ENCODE measurements at regions of chr3 and their contacts with region 1.

Region 1: GRCh38 chr3:141452036-141452435 is 34.8 kb upstream of the RASA2 start:
- DNase-seq: peak in 2 of 4 donors; percentile 46 to 73
- ATAC-seq: peak; percentile 77
- H3K4me3 ChIP-seq: no peak overlapping the region
- H3K27ac ChIP-seq: peak overlapping the region in 1 of 2 donors; percentile 62
- H3K4me1 ChIP-seq: peaks cover 8 to 18% of the 10 kb centered on the region in 2 donors
- H3K27me3 ChIP-seq: no peaks in the 10 kb centered on the region
- CTCF ChIP-seq: peak; percentile 33 to 54

Region 2: DNA sequence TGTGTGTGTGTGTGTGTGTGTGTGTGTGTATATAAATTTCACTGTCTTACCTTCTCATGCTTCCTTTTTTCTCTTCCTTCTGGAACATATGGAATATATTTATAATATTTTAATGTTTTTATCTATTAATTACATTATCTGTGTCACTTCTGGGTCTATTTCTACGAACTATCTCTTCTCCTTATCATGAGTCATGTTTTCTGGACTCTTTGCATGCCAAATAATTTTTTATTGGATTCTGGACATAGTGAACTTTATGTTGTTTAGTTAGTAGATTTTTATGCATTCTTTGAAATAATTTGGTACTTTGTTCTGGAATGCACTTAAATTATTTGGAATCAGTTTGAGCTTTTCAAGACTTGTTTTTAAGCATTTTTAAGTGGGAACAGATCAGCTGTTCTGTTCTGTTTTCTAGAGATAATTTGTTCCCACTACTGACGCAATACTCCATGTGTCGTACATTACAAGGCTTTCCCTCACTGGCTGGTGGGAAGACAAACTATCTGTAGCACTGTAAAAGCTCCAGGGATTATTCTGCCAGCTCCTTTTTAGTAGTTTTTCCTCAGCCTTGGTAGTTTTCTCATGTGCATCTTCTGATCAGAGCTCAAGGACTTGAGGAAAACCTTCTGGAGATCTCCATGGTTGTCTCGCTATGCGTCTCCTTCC is 1215.1 kb before region 1 on chr3:
- intact Hi-C with region 1: no loop called
- DNase-seq: no peak
- ATAC-seq: no peak
- H3K4me3 ChIP-seq: no peak overlapping the region
- H3K27ac ChIP-seq: no peak overlapping the region
- H3K4me1 ChIP-seq: no peaks in the 10 kb centered on the region
- H3K27me3 ChIP-seq: no peaks in the 10 kb centered on the region
- CTCF ChIP-seq: no peak

Region 3: GRCh38 chr3:140816372-140817195 is 635.5 kb before region 1 on chr3:
- intact Hi-C with region 1: no loop called
- DNase-seq: no peak
- ATAC-seq: no peak
- H3K4me3 ChIP-seq: no peak overlapping the region
- H3K27ac ChIP-seq: no peak overlapping the region
- H3K4me1 ChIP-seq: no peaks in the 10 kb centered on the region
- H3K27me3 ChIP-seq: no peaks in the 10 kb centered on the region
- CTCF ChIP-seq: no peak

Region 4: DNA sequence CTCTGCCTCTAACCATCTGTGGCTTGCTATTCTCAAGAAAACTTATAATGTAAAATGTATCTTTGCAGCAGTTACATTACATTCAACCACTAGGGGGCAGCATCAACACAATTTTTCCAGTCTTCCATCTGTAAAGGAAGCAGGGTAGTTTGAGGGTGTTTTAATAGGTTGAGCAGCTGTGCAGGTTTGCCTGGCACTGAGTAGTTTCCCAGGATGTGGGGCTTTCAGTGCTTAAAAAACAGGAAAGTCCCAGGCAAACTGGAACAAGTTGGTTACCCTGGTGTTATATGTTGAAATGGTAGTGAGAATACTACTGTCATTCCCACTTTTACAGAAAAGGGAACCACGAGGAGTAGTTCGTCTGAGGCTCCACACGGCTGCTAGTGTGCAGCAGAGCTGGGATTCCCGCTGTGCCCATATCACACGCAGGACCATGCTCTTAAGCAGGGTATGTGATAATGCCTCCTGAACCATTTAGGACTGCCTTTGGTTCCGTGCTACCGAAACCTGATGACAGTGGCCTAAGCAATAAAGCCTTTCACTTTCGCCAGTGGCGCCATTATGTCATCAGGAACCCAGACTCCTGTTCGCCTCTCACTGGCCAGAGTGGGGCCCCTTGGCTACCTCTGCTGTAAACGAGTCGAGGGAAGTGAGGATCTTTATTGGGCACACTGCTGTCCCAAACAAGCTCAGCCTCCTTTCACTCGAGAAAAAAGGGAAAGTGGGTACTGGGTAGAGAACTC is 148.4 kb before region 1 on chr3:
- intact Hi-C with region 1: loop called (anchors 5 to 10 kb)
- DNase-seq: peak in 2 of 4 donors; percentile 65 to 81
- ATAC-seq: peak; percentile 89
- H3K4me3 ChIP-seq: no peak overlapping the region
- H3K27ac ChIP-seq: no peak overlapping the region
- H3K4me1 ChIP-seq: peaks cover 0 to 19% of the 10 kb centered on the region in 2 donors
- H3K27me3 ChIP-seq: no peaks in the 10 kb centered on the region
- CTCF ChIP-seq: peak; percentile 80 to 81

Region 5: DNA sequence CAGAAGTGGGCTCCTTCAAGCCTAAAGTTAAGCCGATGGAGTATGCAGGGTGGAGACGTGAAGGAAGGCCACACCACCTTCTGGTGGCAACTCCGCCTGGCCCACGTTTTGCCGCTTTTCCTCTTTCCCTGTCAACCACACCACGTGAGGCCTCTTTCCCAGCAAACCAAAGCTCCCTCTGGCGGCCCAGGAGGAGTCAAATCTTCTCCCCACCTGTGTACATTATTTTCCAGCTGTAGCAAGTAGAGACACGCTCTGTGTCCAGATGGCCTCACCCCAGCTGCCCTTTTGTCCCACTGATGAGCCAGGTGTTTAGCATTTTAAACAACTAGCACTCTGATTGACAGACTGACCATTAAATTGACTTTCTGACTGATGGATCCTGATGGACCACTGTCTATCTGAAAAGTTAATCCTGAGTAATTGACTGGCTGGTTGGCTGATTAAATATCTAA is 143.4 kb before region 1 on chr3:
- intact Hi-C with region 1: loop called (anchors 5 to 10 kb)
- DNase-seq: peak in 3 of 4 donors; percentile 64 to 75 (median 70)
- ATAC-seq: peak; percentile 35
- H3K4me3 ChIP-seq: no peak overlapping the region
- H3K27ac ChIP-seq: no peak overlapping the region
- H3K4me1 ChIP-seq: peaks cover 5 to 27% of the 10 kb centered on the region in 2 donors
- H3K27me3 ChIP-seq: no peaks in the 10 kb centered on the region
- CTCF ChIP-seq: peak; percentile 15 to 21

Region 6: DNA sequence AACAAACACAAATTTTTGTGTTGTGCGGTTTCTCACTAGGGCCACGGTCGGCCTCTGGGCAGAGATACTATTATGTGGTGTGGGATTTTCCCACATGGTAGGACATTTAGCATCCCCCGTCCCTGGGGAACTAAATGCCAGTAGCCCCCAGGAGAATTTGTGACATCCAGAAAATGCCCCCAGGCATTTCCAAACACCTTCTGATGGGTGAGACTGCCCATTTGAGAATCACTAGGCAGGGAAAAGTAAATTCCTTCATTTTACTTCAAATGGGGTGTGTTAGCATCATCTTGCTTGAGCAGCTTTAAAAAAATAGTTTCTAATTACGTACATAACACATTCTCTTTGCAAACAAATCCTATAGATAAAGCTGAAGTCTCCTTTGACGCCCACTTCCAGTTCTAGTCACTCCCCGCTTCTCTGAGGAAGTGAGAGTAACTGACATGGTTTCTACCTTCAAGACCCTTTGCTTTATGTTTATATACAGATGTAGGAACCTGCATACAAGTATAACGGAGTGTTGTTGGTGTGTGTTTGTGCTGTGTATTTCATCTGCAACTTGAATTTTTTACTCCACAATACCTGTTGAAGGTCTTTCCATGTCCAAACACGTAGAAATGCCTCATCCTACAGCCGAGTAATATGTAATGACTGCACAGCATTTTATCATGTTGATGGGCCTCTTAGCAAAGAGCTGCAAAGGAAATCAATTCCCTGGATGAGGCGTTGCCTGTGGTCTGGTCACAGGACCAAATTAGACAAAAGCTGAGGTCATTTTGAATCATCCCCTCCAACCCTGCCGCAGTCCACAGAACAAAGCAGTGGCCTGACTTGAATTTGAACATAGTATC is 115.1 kb before region 1 on chr3:
- intact Hi-C with region 1: no loop called
- DNase-seq: peak in 1 of 4 donors; percentile 13
- ATAC-seq: peak; percentile 27
- H3K4me3 ChIP-seq: no peak overlapping the region
- H3K27ac ChIP-seq: peak overlapping the region in 1 of 2 donors; percentile 31
- H3K4me1 ChIP-seq: peaks cover 5 to 7% of the 10 kb centered on the region in 2 donors
- H3K27me3 ChIP-seq: no peaks in the 10 kb centered on the region
- CTCF ChIP-seq: no peak

Region 7: DNA sequence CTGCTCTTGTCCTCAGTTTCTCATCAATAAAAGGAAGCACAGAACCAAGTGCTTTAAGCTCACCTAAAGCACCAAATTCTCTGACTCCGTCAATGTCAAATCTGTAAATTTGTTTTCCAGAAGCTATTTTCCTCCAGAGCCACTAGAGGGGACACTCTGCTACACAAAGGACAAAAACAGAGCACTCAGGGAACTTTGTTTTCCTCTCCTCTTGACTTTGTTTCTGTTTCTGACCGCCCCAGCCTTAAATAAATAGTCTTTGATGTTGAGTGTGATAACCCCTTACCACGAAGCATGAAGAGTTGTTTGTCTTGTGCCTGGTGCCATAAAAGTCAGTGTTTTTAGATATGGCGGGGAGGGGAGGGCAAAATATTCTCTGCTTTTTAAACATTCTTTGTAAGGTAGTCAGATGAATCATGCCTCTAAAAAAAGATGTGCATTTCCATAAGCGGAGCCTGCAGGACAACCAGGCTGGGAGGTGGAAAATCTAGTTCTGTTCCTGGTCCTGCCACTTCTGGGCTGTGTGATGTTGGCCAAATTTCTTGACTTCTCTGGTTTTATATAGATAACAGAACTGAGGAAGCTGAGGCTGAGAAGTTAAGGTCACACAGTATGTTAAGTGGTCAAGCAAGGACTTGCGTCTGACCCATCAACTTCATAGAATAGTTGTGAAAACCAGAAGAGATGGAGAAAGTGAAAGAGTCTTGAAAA is 91.0 kb before region 1 on chr3:
- intact Hi-C with region 1: loop called in 1 of 2 experiments (anchors 5 kb)
- DNase-seq: peak in 2 of 4 donors; percentile 64 to 84
- ATAC-seq: peak; percentile 96
- H3K4me3 ChIP-seq: no peak overlapping the region
- H3K27ac ChIP-seq: peak overlapping the region; percentile 42 to 61
- H3K4me1 ChIP-seq: peaks cover 3 to 17% of the 10 kb centered on the region in 2 donors
- H3K27me3 ChIP-seq: no peaks in the 10 kb centered on the region
- CTCF ChIP-seq: peak; percentile 39 to 78

Region 8: GRCh38 chr3:141853081-141853601 is 401.1 kb after region 1 on chr3:
- intact Hi-C with region 1: no loop called
- DNase-seq: no peak
- ATAC-seq: peak; percentile 40
- H3K4me3 ChIP-seq: no peak overlapping the region
- H3K27ac ChIP-seq: peak overlapping the region; percentile 61 to 69
- H3K4me1 ChIP-seq: peaks cover 0 to 33% of the 10 kb centered on the region in 2 donors
- H3K27me3 ChIP-seq: no peaks in the 10 kb centered on the region
- CTCF ChIP-seq: no peak

Measured in left lung (tissue), 14 donors.